Activated CD8-positive, alpha-beta T cell treated with anti-CD3 and anti-CD28 coated beads, Interleukin-2, amount 10 ng/mL, durations not matched to agents 7 days and 5 days (primary cell): ENCODE measurements at regions of chr1 and their contacts with region 1.

Region 1: DNA sequence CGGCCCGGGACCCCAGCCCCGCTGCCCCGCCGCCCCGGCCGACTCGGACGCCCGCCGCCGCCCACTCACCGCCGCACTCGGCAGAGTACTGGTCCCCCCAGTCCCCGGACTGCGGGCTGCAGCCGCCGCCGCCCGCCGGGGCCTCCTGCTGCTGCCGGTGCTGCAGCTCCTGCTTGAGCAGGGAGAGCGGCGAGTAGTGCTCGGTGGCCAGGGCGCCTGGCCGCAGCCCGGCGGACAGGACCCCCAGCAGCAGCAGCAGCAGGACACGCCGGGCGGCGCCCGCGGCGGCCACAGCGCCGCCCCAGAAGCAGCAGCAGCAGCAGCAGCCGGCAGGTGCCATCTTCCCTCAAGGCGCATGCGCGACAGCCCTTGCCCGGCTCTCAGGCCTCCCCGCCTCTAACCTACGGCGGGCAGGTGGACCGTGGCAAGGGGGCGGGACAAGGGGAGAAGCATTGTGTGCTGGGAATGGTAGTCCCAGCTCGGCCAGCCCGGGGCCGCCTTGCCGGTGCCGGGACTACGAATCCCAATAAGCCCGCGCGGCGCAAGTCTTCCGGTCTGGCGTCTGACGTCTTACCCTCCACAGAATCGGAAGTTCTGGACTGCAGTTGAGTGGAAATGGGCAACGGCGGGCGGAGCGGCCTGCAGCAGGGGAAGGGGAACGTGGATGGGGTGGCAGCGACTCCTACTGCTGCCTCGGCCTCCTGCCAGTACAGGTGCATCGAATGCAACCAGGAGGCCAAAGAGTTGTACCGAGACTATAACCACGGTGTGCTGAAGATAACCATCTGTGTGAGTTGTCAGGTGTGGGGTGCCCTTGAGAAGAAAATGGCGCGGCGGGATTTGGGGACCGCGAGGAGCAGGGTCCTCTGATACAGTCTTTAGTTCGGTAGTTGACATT is at the starts of genes ARV1 and TTC13:
- DNase-seq: peak; percentile 98
- ATAC-seq: peak; percentile 96
- H3K4me3 Mint-ChIP-seq: peak within 1 kb of the TSS; percentile 96
- H3K27ac Mint-ChIP-seq: peak within 1 kb of the TSS; percentile 99
- H3K4me1 Mint-ChIP-seq: peaks cover 31% of the 10 kb centered on the region
- H3K27me3 Mint-ChIP-seq: no peaks in the 10 kb centered on the region
- total RNA-seq, gene ARV1: 15.6 to 16.4 TPM
- total RNA-seq, gene TTC13: 34.0 to 34.2 TPM

Region 2: DNA sequence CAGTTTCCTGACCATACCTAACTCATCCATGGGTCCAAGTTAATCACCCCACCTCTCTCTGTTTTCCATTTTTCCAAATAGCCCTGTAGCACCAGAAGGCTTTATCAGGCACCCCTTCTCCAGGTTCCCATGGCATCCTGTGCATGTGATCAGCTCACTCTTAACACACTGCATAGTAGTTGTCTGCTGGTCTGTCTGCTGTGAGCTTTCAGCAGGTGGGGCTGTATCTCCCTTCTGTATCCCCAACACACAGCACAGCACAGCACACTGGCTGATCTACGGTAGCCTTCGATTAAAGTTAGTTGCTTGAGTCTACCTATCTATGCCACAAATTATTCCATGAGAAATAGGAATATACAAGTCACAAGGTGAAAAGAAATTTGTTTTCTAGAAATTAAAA is 56.1 kb before region 1 on chr1:
- CTCF ChIA-PET with region 1: interaction called, 11 read pairs
- POLR2A ChIA-PET with region 1: interaction called, 3 read pairs
- DNase-seq: no peak
- ATAC-seq: no peak
- H3K4me3 Mint-ChIP-seq: no peak overlapping the region
- H3K27ac Mint-ChIP-seq: no peak overlapping the region
- H3K4me1 Mint-ChIP-seq: peaks cover 2% of the 10 kb centered on the region
- H3K27me3 Mint-ChIP-seq: no peaks in the 10 kb centered on the region